ENCODE measurements at regions of chr21 and their contacts with region 1.

Region 1: DNA sequence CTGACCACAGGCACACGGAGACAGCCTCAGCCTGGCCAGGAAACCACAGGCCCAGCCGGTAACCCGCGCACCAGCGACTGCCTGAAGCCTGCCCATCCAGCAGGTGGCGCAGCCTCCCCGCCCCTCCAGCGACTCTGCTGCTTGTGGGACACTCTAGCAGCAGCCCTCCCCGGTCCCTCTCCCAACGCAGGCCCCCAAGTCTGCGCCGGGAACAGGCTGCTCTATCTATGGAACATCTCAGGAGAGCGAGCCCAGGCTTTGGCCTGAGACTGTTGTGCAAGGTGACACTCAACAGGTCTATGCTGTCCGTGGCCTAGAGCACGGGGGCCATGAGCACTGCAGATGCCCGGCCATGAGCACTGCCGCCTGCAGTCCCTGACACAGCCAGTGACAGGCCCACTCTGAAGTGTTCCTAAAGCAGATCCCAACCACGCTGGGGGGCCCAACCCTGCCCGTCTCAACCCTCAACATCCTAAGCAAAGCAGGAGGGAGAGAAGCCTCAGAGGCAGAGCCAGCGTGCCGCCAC is 28.4 kb downstream of the WDR4 start:
- DNase-seq: peak in 1 of 7 donors; percentile 20
- H3K4me3 ChIP-seq: no peak overlapping the region
- H3K27ac ChIP-seq: no peak overlapping the region
- H3K4me1 ChIP-seq: peaks cover 0 to under 1% of the 10 kb centered on the region in 2 donors
- H3K27me3 ChIP-seq: no peaks in the 10 kb centered on the region
- CTCF ChIP-seq: peak in 4 of 6 experiments; percentile 7 to 28 (median 26)
- POLR2A ChIP-seq: no peak

Region 2: DNA sequence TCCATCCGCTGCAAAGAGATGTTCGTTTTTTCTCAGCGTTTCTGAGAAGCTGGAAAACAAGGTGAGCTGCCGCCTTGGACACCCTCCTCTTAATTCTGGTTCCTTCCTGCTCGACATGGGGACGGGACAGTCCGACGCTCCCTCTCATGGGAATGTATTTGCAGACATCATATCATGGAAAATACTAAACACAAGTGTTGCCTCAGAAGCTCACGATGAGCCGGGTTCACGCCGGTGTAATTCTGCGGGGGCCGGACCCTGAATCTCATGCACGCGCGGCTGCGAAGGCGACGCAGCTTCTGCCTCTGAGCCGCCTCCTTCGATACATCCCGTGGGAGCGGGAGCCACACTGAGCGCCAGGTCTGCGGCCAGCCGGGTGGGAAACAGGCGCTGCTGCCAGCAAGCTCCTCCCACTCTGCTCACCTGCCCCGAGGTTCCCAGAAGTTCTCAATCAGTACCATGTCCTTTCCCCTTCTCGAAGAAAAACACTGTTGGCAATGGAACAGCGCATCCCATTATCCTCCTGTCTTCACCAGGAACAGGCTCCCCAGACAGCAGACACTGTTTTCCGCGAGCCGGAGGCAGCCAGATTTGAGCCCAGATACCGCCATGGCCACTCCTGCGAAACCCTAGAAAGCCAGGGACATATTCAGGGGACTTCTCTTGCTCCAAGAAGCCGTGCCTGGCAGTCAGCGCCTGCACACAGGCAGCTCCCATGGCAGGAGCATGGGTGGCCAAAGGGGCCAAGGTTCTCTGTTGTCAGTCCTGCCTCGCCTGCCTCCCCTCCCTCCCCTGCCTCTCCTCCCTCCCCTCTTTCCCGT is 69.6 kb before region 1 on chr21:
- intact Hi-C with region 1: loop called in 1 of 2 experiments (anchors 10 kb)
- DNase-seq: peak in 4 of 7 donors; percentile 28 to 50 (median 43)
- H3K4me3 ChIP-seq: peak overlapping the region in 1 of 4 donors; percentile 36
- H3K27ac ChIP-seq: peak overlapping the region in 1 of 5 donors; percentile 29
- H3K4me1 ChIP-seq: peaks cover 4 to 12% of the 10 kb centered on the region in 2 donors
- H3K27me3 ChIP-seq: no peaks in the 10 kb centered on the region
- CTCF ChIP-seq: no peak
- POLR2A ChIP-seq: no peak

Measured in adrenal gland (tissue), 19 donors.